ENCODE measurements at regions of chr17 and their contacts with region 1.

Region 1: GRCh38 chr17:81601525-81602120 is 35.3 kb downstream of the NPLOC4 start:
- DNase-seq: peak; percentile 58
- ATAC-seq: peak; percentile 93
- H3K4me3 Mint-ChIP-seq: no peak overlapping the region
- H3K27ac Mint-ChIP-seq: no peak overlapping the region
- H3K4me1 Mint-ChIP-seq: peaks cover 17% of the 10 kb centered on the region
- H3K27me3 Mint-ChIP-seq: no peaks in the 10 kb centered on the region

Region 2: GRCh38 chr17:81514739-81515529 is 86.7 kb before region 1 on chr17:
- CTCF ChIA-PET with region 1: interaction called, 23 read pairs
- DNase-seq: peak; percentile 79
- ATAC-seq: peak; percentile 47
- H3K4me3 Mint-ChIP-seq: peak overlapping the region; percentile 94
- H3K27ac Mint-ChIP-seq: peak overlapping the region; percentile 89
- H3K4me1 Mint-ChIP-seq: peaks cover 34% of the 10 kb centered on the region
- H3K27me3 Mint-ChIP-seq: no peaks in the 10 kb centered on the region

Region 3: GRCh38 chr17:81570902-81571453 is 30.6 kb before region 1 on chr17:
- CTCF ChIA-PET with region 1: interaction called, 15 read pairs
- DNase-seq: no peak
- ATAC-seq: no peak
- H3K4me3 Mint-ChIP-seq: no peak overlapping the region
- H3K27ac Mint-ChIP-seq: no peak overlapping the region
- H3K4me1 Mint-ChIP-seq: no peaks in the 10 kb centered on the region
- H3K27me3 Mint-ChIP-seq: no peaks in the 10 kb centered on the region

Region 4: GRCh38 chr17:81582341-81582740 is 19.3 kb before region 1 on chr17:
- CTCF ChIA-PET with region 1: interaction called, 11 read pairs
- DNase-seq: no peak
- ATAC-seq: no peak
- H3K4me3 Mint-ChIP-seq: no peak overlapping the region
- H3K27ac Mint-ChIP-seq: no peak overlapping the region
- H3K4me1 Mint-ChIP-seq: no peaks in the 10 kb centered on the region
- H3K27me3 Mint-ChIP-seq: no peaks in the 10 kb centered on the region

Region 5: DNA sequence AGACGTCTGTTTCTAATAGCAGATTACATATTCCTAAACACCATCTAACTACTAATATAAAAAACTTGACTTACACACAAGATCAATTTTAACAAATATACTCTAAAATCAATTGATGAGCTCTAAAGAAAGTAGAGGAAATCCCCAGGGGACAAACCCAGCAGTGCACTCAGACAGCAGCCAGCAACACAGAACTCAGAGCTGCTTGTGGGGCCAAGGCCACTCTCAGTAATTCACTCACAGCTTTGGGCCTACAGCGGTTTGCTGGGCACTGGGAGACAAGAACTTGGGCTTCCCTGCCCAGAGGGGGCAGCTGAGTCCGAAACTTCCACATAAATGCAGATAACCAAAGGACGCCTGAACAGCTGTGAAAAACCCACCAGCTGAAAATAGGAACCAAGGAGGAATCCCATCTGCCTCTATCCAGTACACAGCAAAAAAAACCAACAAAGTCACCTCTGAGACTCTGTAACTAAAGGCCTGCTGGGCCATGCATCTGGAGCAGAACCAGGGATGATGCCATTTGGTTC is 13.8 kb after region 1 on chr17:
- CTCF ChIA-PET with region 1: interaction called, 14 read pairs
- DNase-seq: no peak
- ATAC-seq: no peak
- H3K4me3 Mint-ChIP-seq: no peak overlapping the region
- H3K27ac Mint-ChIP-seq: peak overlapping the region; percentile 86
- H3K4me1 Mint-ChIP-seq: peaks cover 30% of the 10 kb centered on the region
- H3K27me3 Mint-ChIP-seq: no peaks in the 10 kb centered on the region

Measured in activated CD8-positive, alpha-beta memory T cell treated with anti-CD3 and anti-CD28 coated beads, Interleukin-2, amount 10 ng/mL, durations not matched to agents 7 days and 5 days (primary cell).